ENCODE measurements at regions of chr6 and their contacts with region 1.

Region 1: GRCh38 chr6:50128420-50129005 is 78.8 kb upstream of the DEFB112 start:
- DNase-seq: no peak
- ATAC-seq: no peak

Region 2: GRCh38 chr6:50301307-50301706 is 172.8 kb after region 1 on chr6:
- intact Hi-C with region 1: no loop called
- DNase-seq: no peak
- ATAC-seq: no peak

Region 3: GRCh38 chr6:50602292-50602691 is 473.8 kb after region 1 on chr6:
- intact Hi-C with region 1: loop called (anchors 10 kb)
- DNase-seq: no peak
- ATAC-seq: no peak